Activated CD4-positive, alpha-beta T cell treated with anti-CD3 and anti-CD28 coated beads for 36 hours (primary cell): ENCODE measurements at regions of chr2 and their contacts with region 1.

Region 1: DNA sequence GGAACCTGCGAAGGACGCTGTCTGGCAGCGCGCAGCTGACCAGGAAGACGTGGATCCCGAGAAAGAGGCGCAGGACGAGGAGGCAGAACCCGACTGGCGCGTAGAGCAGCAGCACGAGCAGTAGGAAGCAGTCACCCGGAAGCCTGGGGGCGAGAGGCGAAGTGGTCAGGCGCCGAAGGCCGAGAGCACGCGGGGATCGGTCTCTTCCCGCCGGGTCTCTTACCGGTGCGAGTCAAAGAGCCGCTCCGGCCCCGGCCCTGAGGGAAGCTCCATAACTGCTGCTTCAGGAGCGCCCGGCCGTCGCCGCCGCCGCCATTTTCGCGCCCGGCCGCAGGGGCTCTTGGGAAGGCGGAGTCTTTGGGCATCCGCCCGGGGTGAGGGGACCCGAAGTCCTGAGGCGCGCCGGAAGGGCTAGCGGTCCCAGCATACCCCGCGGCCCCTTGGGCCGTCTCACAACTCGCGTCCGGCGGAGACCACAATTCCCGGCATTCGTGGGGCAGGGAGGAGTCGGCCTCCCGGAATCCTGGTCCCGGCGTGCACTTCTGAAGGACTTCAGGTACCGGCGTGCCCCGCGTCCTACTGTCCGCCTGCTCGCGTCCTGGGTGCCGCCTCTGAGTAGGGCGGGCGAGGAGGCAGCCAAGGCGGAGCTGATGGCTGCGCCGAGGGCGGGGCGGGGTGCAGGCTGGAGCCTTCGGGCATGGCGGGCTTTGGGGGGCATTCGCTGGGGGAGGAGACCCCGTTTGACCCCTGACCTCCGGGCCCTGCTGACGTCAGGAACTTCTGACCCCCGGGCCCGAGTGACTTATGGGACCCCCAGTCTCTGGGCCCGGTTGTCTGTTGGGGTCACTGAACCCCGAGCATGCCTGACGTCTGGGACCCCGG is at the starts of genes AUP1 and HTRA2:
- DNase-seq: peak; percentile 97
- ATAC-seq: peak; percentile 90
- H3K4me3 Mint-ChIP-seq: peak within 1 kb of the TSS; percentile 100
- H3K27ac Mint-ChIP-seq: peak within 1 kb of the TSS; percentile 98
- H3K4me1 Mint-ChIP-seq: peaks cover 35% of the 10 kb centered on the region
- H3K27me3 Mint-ChIP-seq: no peaks in the 10 kb centered on the region
- total RNA-seq, gene AUP1: 92.0 to 122 TPM
- total RNA-seq, gene HTRA2: 43.5 to 47.7 TPM

Region 2: GRCh38 chr2:74250189-74250631 is 279.4 kb before region 1 on chr2:
- CTCF ChIA-PET with region 1: interaction called, 4 read pairs
- POLR2A ChIA-PET with region 1: interaction called, 3 read pairs
- intact Hi-C with region 1: loop called in 1 of 2 experiments (anchors 1 kb)
- DNase-seq: peak; percentile 75
- ATAC-seq: peak; percentile 78
- H3K4me3 Mint-ChIP-seq: no peak overlapping the region
- H3K27ac Mint-ChIP-seq: no peak overlapping the region
- H3K4me1 Mint-ChIP-seq: no peaks in the 10 kb centered on the region
- H3K27me3 Mint-ChIP-seq: no peaks in the 10 kb centered on the region

Region 3: GRCh38 chr2:74421221-74421870 is 108.3 kb before region 1 on chr2 and contains the starts of genes C2orf81 and WDR54:
- CTCF ChIA-PET with region 1: no interaction called
- POLR2A ChIA-PET with region 1: no interaction called
- intact Hi-C with region 1: loop called in 1 of 2 experiments (anchors 1 kb)
- DNase-seq: peak; percentile 97
- ATAC-seq: peak; percentile 92
- H3K4me3 Mint-ChIP-seq: peak within 1 kb of the TSS; percentile 91
- H3K27ac Mint-ChIP-seq: peak within 1 kb of the TSS; percentile 98
- H3K4me1 Mint-ChIP-seq: peaks cover 34% of the 10 kb centered on the region
- H3K27me3 Mint-ChIP-seq: no peaks in the 10 kb centered on the region
- total RNA-seq, gene C2orf81: 4.5 to 4.9 TPM
- total RNA-seq, gene WDR54: 103 to 119 TPM

Region 4: DNA sequence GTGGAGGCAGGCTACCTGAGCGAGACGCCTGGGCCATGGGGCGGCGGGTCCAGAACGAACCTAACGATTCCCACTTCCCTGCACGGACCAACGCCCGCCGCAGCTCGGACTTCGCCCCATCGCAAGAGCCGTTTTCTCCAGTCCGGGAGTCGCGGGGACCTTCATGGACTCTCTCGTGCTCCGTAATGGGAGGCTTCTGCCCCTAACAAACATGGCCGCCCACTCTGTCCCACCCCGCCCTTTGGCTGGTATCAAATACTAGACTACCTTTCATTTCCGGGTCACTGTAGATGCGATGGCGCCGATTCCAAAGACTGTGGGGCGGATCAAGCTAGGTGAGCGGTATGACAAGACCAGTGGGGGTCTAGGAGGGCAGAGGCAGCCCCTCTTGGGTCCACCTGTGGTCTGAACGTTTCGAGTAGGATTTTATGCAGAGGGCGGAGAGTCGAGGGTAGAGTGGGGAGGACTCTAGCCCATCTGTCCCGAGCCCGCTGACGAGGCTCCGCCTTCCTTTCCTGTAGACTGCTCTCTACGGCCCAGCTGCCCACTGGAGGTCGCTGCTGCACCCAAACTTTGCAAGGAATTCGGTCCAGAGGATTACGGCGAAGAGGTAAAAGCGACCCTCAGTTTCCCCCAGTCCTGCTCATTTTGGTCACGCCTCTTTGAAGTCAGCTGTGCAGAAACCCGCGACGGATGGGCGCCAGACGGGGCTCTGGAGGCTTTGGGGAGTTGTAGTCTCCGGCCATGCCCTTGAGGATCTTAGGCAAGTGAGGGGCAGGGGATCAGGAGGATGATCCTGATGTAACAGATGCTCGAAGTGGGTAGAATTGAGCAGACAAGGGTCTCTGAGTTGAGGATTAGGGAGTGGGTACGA is 46.6 kb before region 1 on chr2 and contains the starts of genes CCDC142 and TTC31:
- CTCF ChIA-PET with region 1: interaction called, 33 read pairs
- POLR2A ChIA-PET with region 1: interaction called, 3 read pairs
- intact Hi-C with region 1: loop called (anchors 1 kb)
- DNase-seq: peak; percentile 96
- ATAC-seq: peak; percentile 95
- H3K4me3 Mint-ChIP-seq: peak within 1 kb of the TSS; percentile 90
- H3K27ac Mint-ChIP-seq: peak within 1 kb of the TSS; percentile 99
- H3K4me1 Mint-ChIP-seq: peaks cover 31% of the 10 kb centered on the region
- H3K27me3 Mint-ChIP-seq: no peaks in the 10 kb centered on the region
- total RNA-seq, gene CCDC142: 9.7 to 13.2 TPM
- total RNA-seq, gene TTC31: 24.0 to 24.6 TPM

Region 5: GRCh38 chr2:74507145-74507925 is 22.3 kb before region 1 on chr2 and contains the start of gene PCGF1:
- CTCF ChIA-PET with region 1: interaction called, 4 read pairs
- POLR2A ChIA-PET with region 1: interaction called, 5 read pairs
- intact Hi-C with region 1: loop called (anchors 1 kb)
- DNase-seq: peak; percentile 99
- ATAC-seq: peak; percentile 92
- H3K4me3 Mint-ChIP-seq: peak within 1 kb of the TSS; percentile 93
- H3K27ac Mint-ChIP-seq: peak within 1 kb of the TSS; percentile 99
- H3K4me1 Mint-ChIP-seq: peaks cover 40% of the 10 kb centered on the region
- H3K27me3 Mint-ChIP-seq: peaks cover 38% of the 10 kb centered on the region
- total RNA-seq, gene PCGF1: 21.7 to 28.7 TPM

Region 6: GRCh38 chr2:74603282-74604000 is 73.8 kb after region 1 on chr2:
- CTCF ChIA-PET with region 1: no interaction called
- POLR2A ChIA-PET with region 1: no interaction called
- intact Hi-C with region 1: no loop called
- DNase-seq: no peak
- ATAC-seq: peak; percentile 55
- H3K4me3 Mint-ChIP-seq: no peak overlapping the region
- H3K27ac Mint-ChIP-seq: no peak overlapping the region
- H3K4me1 Mint-ChIP-seq: peaks cover 3% of the 10 kb centered on the region
- H3K27me3 Mint-ChIP-seq: peaks cover 38% of the 10 kb centered on the region

Region 7: GRCh38 chr2:74653985-74654882 is 124.6 kb after region 1 on chr2 and contains the start of gene SEMA4F:
- CTCF ChIA-PET with region 1: interaction called, 3 read pairs
- POLR2A ChIA-PET with region 1: no interaction called
- intact Hi-C with region 1: loop called in 1 of 2 experiments (anchors 1 kb)
- DNase-seq: peak; percentile 97
- ATAC-seq: peak; percentile 100
- H3K4me3 Mint-ChIP-seq: peak within 1 kb of the TSS; percentile 76
- H3K27ac Mint-ChIP-seq: peak within 1 kb of the TSS; percentile 49
- H3K4me1 Mint-ChIP-seq: peaks cover 13% of the 10 kb centered on the region
- H3K27me3 Mint-ChIP-seq: peaks cover 7% of the 10 kb centered on the region
- total RNA-seq, gene SEMA4F: 5.7 to 7.4 TPM